AG04449 (cell line): ENCODE measurements at regions of chr11 and their contacts with region 1.

Region 1: DNA sequence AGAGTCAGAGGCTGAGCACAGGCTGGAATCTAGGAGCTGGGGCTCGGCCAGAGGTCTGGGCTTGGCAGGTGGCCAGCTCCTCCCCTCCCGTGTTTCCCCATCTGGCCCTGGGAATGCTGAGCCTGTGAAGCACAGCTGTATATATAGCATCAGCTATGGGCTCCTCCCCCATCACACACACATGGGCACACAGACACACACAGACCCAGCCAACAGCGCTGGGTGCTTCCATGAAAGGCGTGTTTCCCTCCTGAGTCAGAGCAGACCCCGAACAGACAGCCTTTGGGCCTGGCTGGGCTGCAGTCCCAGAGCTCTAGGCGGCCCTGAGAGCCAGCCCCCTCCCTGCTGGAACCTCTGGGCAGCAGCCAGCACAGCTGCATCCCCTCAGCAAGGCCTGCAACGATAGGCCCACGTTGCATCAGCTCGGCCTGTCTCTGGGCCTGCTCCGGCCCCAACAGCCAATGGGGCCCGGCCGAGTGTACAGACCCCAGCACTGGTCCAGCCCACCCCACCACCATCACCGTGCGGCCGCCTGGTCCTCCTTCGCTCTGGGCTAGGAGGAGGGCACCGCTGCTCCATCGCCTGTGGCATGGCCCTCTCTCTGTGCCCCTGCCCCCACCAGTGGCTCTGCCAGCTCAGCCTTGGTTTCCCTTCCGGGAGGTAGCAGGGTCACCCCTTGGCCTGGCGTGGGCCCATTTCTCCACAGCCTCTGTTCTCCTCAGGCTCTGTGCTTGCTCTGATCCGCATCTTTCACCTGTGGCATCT is 7.6 kb upstream of the SERPINH1 start:
- DNase-seq: peak; percentile 99
- H3K4me3 ChIP-seq: peak overlapping the region; percentile 37
- CTCF ChIP-seq: no peak

Region 2: DNA sequence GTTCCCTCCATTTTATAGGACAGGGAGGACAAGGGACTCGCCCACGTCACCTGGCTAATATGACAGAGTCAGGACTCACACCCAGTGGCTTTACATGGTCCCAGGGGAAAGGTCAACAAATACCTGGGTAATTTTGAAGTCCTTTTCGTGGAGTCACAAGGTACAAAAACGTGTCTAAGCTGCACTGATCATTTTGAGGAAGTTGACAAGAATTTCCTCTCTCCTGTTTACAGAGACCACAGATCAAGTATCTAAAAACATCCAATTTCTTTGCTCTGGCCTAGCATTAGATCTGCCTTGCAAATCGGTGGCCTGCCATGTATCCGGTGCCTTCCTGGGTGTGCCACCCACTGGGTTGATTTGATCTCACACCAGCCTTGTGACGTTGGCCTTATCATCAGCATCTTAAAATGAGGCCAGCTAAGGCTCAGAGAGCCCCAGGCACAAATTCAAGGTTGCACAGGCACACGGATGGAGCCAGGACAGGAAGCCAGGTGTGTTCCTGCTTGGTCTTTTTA is 46.3 kb before region 1 on chr11:
- CTCF ChIA-PET with region 1: no interaction called
- POLR2A ChIA-PET with region 1: no interaction called
- DNase-seq: no peak
- H3K4me3 ChIP-seq: no peak overlapping the region
- CTCF ChIP-seq: no peak

Region 3: GRCh38 chr11:75570559-75571139 is 16.2 kb after region 1 on chr11:
- CTCF ChIA-PET with region 1: interaction called, 18 read pairs
- POLR2A ChIA-PET with region 1: interaction called, 168 read pairs
- DNase-seq: no peak
- H3K4me3 ChIP-seq: no peak overlapping the region
- CTCF ChIP-seq: no peak

Region 4: GRCh38 chr11:75577207-75577606 is 22.8 kb after region 1 on chr11:
- CTCF ChIA-PET with region 1: interaction called, 18 read pairs
- POLR2A ChIA-PET with region 1: interaction called, 79 read pairs
- DNase-seq: no peak
- H3K4me3 ChIP-seq: no peak overlapping the region
- CTCF ChIP-seq: peak; percentile 68